ENCODE measurements at regions of chr6 and their contacts with region 1.

Region 1: DNA sequence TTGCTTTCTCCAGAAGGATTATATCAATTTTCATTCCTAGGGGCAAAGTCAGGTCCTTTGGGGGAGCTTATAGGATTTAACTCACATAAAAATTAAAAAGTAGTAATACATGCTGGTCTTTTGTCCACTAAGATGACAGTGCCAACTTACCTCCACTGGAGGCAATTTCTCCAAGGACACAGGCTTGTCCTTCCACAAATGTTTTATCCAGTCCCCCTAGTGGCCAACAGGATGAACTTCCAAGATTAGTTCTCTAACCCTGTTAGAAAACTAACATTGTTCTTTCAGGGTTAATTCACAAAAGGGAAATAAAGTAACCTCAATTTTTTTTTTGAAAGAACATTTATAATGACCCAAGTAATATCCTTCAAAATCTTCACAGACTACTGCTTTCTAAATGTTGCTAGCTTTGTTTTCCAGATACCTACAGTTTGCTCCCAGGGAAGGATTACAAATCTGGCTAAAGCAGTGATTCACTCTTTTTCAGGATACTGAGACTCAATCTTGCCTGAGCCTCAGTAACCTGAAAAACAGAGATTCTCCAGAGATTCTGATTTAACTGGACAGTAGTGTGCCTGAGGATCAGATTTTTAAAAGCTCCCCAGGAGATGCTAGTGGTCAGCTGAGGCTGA is 31.7 kb upstream of the UBR2 start:
- DNase-seq: peak; percentile 72
- H3K4me3 Mint-ChIP-seq: no peak overlapping the region
- H3K27ac Mint-ChIP-seq: no peak overlapping the region
- H3K4me1 Mint-ChIP-seq: no peaks in the 10 kb centered on the region
- H3K27me3 Mint-ChIP-seq: peaks cover 1% of the 10 kb centered on the region

Region 2: DNA sequence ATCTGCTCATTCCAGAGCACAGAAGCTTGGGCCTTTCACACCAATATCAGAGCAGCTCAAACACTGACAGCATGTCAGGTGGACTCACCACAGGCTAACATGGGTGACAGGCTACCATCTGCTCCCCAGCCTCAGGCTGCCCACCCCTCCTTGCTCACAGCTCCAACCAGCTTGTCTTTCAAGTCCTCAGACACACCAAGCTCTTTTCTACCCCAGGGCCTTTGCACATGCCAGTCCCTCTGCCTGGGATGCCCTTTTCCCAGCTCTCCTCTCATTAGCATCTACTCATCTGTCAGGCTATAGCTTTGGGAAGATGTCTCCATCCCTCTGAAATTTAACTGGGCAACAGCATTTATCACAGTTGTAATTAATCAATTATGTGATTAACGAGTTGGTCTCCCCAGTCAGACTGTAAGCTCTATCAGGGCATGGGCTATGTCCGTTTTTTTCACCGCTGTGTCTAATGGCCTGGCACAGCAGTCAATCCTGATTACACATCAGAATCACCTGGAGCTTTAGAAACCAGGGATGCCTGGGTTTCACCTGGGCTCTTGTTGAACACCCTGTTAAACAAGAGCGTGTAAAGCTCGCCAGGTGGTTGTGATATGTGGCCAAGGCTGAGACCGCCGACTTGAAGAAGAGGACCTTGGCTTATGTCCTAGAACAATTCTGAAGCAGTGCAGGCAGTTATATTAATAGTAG is 225.6 kb before region 1 on chr6:
- intact Hi-C with region 1: loop called (anchors 5 kb)
- DNase-seq: no peak
- H3K4me3 Mint-ChIP-seq: no peak overlapping the region
- H3K27ac Mint-ChIP-seq: no peak overlapping the region
- H3K4me1 Mint-ChIP-seq: peaks cover 8% of the 10 kb centered on the region
- H3K27me3 Mint-ChIP-seq: no peaks in the 10 kb centered on the region

Region 3: GRCh38 chr6:42808492-42809483 is 276.6 kb after region 1 on chr6:
- intact Hi-C with region 1: no loop called
- DNase-seq: no peak
- H3K4me3 Mint-ChIP-seq: no peak overlapping the region
- H3K27ac Mint-ChIP-seq: no peak overlapping the region
- H3K4me1 Mint-ChIP-seq: peaks cover 6% of the 10 kb centered on the region
- H3K27me3 Mint-ChIP-seq: no peaks in the 10 kb centered on the region

Measured in activated CD4-positive, alpha-beta T cell treated with anti-CD3 and anti-CD28 coated beads, Interleukin-2, amount 10 ng/mL, durations not matched to agents 24 days and 14 days (primary cell).